ENCODE measurements at regions of chr16 and their contacts with region 1.

Region 1: DNA sequence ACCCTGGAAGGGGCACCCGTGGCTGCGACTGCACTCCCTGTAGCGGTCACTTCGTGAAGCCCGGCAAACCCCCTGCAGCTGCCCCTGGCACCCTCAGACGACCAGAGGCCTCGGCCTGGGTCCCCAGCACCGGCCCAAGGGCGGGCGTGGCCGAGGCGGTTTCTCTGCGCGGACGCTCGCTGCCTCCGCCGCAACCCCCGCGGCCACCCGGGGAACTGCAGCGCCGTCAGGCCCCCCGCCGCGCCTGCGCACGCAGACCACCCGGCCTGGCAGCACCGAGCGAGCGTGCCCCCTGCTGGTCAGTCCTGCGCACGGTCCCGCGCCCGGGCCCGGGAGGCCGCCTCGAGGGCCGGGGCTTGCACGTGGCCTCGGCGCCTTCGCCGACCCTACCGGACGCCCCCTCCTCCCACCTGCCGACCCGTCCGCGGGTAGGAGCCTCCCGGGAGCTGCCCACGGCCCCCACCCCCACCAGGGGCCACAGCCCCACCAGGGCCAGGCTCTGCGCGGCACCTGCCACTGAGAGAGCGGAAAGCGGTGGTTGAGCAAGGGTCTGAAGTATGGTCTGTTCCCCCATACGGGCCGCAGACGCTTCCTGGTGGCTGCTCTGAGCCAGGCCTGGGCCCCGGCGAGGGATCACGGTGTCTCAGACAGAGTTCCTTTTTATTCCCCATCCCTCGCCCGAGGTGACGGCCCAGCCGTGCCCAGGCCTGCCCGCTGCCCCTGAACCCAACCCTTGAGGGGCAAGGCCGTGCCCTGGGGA is 11.5 kb upstream of the HS3ST6 start:
- DNase-seq: peak; percentile 71
- H3K4me3 ChIP-seq: peak overlapping the region; percentile 10 to 64 (median 45)
- H3K27ac ChIP-seq: no peak overlapping the region
- H3K4me1 ChIP-seq: peaks cover 6% of the 10 kb centered on the region
- H3K27me3 ChIP-seq: no peaks in the 10 kb centered on the region
- CTCF ChIP-seq: peak; percentile 64 to 79

Region 2: DNA sequence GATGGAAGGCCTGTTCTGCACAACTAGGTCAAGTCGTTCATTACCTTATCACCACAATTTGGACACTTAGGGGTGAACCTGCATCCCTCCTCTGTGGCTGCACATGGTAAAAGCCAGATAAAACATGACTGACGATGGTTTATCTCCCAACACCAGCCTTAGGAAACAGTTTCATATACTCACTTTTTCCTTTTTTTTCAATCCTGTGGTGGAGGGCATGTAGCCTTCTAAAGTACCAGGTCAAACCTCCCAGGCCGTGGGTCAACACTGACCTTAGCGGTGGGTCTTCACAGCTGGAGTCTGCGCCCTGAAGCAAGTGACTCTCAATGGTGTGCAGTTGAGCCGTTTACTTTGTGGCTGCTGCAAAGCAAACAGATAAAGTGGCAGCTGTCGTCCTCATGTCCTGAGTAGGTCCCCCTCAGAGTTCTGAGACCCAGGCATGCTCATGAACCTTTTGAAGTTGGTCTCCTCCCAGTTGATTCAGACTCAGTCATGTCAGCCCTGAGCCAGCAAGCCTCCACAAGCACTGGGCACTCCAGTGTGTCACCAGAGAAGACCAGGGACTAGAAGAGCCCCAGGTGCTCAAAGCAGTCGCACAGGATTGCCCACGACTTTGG is 96.8 kb before region 1 on chr16:
- CTCF ChIA-PET with region 1: no interaction called
- dilution Hi-C with region 1: loop called (anchors 5 kb)
- in situ Hi-C with region 1: no loop called
- intact Hi-C with region 1: no loop called
- DNase-seq: peak; percentile 54
- H3K4me3 ChIP-seq: no peak overlapping the region
- H3K27ac ChIP-seq: no peak overlapping the region
- H3K4me1 ChIP-seq: peaks cover 34% of the 10 kb centered on the region
- H3K27me3 ChIP-seq: no peaks in the 10 kb centered on the region
- CTCF ChIP-seq: no peak

Region 3: DNA sequence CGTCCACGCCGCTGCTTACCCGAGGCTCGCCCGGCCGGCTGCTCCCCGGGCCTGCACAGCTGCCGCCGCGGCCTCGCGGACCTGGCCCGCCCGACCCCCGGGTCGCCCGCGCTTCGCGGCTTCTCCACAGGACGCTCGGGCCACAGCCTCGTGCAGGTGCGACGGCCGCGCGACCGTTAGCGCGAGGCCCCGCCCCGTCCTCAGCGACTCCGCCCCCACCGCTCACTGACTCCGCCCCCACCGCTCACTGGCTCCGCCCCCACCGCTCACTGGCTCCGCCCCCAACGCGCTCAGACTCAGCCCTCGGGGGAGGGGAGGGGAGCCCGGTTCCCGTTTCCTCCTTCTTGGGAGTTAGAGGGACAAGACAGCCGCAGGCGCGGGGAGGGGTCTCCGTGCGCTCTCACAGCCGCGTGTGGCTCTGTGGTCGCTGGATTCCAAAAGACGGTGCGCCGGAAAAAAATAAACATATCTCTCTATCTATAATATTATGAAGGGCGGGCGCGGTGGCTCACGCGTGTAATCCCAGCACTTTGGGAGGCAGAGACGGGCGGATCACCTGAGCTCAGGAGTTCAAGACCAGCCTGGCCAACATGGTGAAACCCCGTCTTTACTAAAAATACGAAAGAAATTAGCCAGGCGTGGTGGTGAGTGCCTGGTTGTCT is 57.7 kb before region 1 on chr16 and contains the start of gene MEIOB:
- CTCF ChIA-PET with region 1: no interaction called
- dilution Hi-C with region 1: loop called (anchors 5 kb)
- in situ Hi-C with region 1: loop called (anchors 5 to 10 kb)
- intact Hi-C with region 1: loop called (anchors 2 kb)
- DNase-seq: no peak
- H3K4me3 ChIP-seq: peak within 1 kb of the TSS in 1 of 3 experiments; percentile 16
- H3K27ac ChIP-seq: no peak within 1 kb of the TSS
- H3K4me1 ChIP-seq: peaks cover 8% of the 10 kb centered on the region
- H3K27me3 ChIP-seq: peaks cover 3% of the 10 kb centered on the region
- CTCF ChIP-seq: no peak
- total RNA-seq, gene MEIOB: 0.17 TPM in 1 of 2 donors, not detected in the other

Region 4: GRCh38 chr16:1942810-1943726 is 13.3 kb after region 1 on chr16 and contains the start of gene MSRB1:
- CTCF ChIA-PET with region 1: interaction called, 25 read pairs
- dilution Hi-C with region 1: no loop called
- in situ Hi-C with region 1: no loop called
- intact Hi-C with region 1: no loop called
- DNase-seq: peak; percentile 97
- H3K4me3 ChIP-seq: peak within 1 kb of the TSS; percentile 58 to 87 (median 78)
- H3K27ac ChIP-seq: no peak within 1 kb of the TSS
- H3K4me1 ChIP-seq: peaks cover 17% of the 10 kb centered on the region
- H3K27me3 ChIP-seq: no peaks in the 10 kb centered on the region
- CTCF ChIP-seq: no peak
- total RNA-seq, gene MSRB1: 19.2 to 22.0 TPM

Measured in mammary epithelial cell (primary cell).